ENCODE measurements at regions of chr14 and their contacts with region 1.

Region 1: GRCh38 chr14:32382704-32383103 is 53.6 kb downstream of the AKAP6 start:
- DNase-seq: no peak
- ATAC-seq: peak; percentile 93
- H3K4me3 ChIP-seq: no peak overlapping the region
- H3K27ac ChIP-seq: no peak overlapping the region
- H3K4me1 ChIP-seq: no peaks in the 10 kb centered on the region
- H3K27me3 ChIP-seq: no peaks in the 10 kb centered on the region
- CTCF ChIP-seq: peak; percentile 24 to 59 (median 47); a peak in 4 of 6 replicates
- POLR2A ChIP-seq: no peak
- RAD21 ChIP-seq: peak; percentile 73

Region 2: DNA sequence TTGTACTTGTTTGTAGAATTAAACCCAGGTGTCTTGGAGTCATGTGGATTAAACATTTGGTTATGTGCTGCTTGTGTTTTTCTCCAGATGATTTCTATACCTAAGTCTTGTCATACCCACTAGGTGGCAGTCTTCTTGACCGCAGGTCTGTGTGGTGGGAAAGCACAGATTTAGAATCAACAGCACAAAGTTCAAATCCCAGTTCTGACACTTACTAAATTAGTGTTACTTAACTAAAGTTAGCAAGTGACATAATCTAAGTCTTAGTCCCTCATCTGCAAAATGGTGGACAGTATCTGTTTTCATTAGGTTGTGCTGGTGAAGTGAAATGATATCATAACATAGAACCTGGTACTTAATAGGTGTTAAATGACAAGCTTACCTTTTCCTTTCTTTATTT is 456.6 kb before region 1 on chr14:
- CTCF ChIA-PET with region 1: no interaction called
- POLR2A ChIA-PET with region 1: no interaction called
- RAD21 ChIA-PET with region 1: no interaction called
- intact Hi-C with region 1: loop called (anchors 2 kb)
- DNase-seq: peak; percentile 54
- ATAC-seq: peak; percentile 84
- H3K4me3 ChIP-seq: no peak overlapping the region
- H3K27ac ChIP-seq: no peak overlapping the region
- H3K4me1 ChIP-seq: peaks cover 0 to 18% of the 10 kb centered on the region in 2 experiments; a peak in 2 of 4 replicates
- H3K27me3 ChIP-seq: no peaks in the 10 kb centered on the region
- CTCF ChIP-seq: peak; percentile 52 to 80 (median 72); a peak in 5 of 6 replicates
- POLR2A ChIP-seq: no peak
- RAD21 ChIP-seq: peak; percentile 57

Region 3: GRCh38 chr14:31937721-31938346 is 444.9 kb before region 1 on chr14:
- CTCF ChIA-PET with region 1: interaction called, 10 read pairs
- POLR2A ChIA-PET with region 1: interaction called, 5 read pairs
- RAD21 ChIA-PET with region 1: interaction called, 4 to 6 read pairs
- intact Hi-C with region 1: loop called (anchors 1 kb)
- DNase-seq: peak; percentile 91
- ATAC-seq: peak; percentile 91
- H3K4me3 ChIP-seq: no peak overlapping the region
- H3K27ac ChIP-seq: no peak overlapping the region
- H3K4me1 ChIP-seq: peaks cover 30 to 50% of the 10 kb centered on the region in 2 experiments
- H3K27me3 ChIP-seq: no peaks in the 10 kb centered on the region
- CTCF ChIP-seq: no peak
- POLR2A ChIP-seq: no peak
- RAD21 ChIP-seq: peak; percentile 13; the same call in 1 of the 2 replicates

Region 4: GRCh38 chr14:32408018-32408417 is 25.3 kb after region 1 on chr14:
- CTCF ChIA-PET with region 1: no interaction called
- POLR2A ChIA-PET with region 1: no interaction called
- RAD21 ChIA-PET with region 1: no interaction called
- intact Hi-C with region 1: no loop called
- DNase-seq: no peak
- ATAC-seq: no peak
- H3K4me3 ChIP-seq: no peak overlapping the region
- H3K27ac ChIP-seq: no peak overlapping the region
- H3K4me1 ChIP-seq: no peaks in the 10 kb centered on the region
- H3K27me3 ChIP-seq: no peaks in the 10 kb centered on the region
- CTCF ChIP-seq: no peak
- POLR2A ChIP-seq: no peak
- RAD21 ChIP-seq: no peak

Region 5: GRCh38 chr14:32430326-32430725 is 47.6 kb after region 1 on chr14:
- CTCF ChIA-PET with region 1: no interaction called
- POLR2A ChIA-PET with region 1: no interaction called
- RAD21 ChIA-PET with region 1: no interaction called
- intact Hi-C with region 1: no loop called
- DNase-seq: no peak
- ATAC-seq: no peak
- H3K4me3 ChIP-seq: no peak overlapping the region
- H3K27ac ChIP-seq: no peak overlapping the region
- H3K4me1 ChIP-seq: no peaks in the 10 kb centered on the region
- H3K27me3 ChIP-seq: no peaks in the 10 kb centered on the region
- CTCF ChIP-seq: no peak
- POLR2A ChIP-seq: no peak
- RAD21 ChIP-seq: no peak

Region 6: DNA sequence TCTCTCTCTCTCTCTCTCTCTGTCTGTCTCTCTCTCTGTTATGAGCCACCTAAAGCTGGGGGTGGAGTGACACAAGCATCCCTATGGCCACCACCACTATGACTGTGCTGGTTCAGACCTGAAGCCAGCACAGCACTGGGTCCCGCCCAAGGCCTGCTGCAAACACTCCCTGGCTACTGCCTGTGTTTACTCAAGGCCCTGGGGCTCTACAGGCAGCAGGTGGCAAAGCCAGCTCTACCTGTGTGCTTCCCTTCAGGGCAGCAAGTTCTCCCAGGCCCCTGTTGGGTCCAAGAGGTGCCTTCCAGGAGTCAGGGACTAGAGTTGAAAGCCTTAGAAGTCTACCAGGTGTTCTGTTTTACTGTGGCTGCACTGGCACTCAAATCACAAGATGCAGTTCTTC is 362.8 kb after region 1 on chr14:
- CTCF ChIA-PET with region 1: no interaction called
- POLR2A ChIA-PET with region 1: no interaction called
- RAD21 ChIA-PET with region 1: no interaction called
- intact Hi-C with region 1: no loop called
- DNase-seq: no peak
- ATAC-seq: no peak
- H3K4me3 ChIP-seq: no peak overlapping the region
- H3K27ac ChIP-seq: no peak overlapping the region
- H3K4me1 ChIP-seq: no peaks in the 10 kb centered on the region
- H3K27me3 ChIP-seq: no peaks in the 10 kb centered on the region; the same call in 1 of the 2 replicates
- CTCF ChIP-seq: no peak
- POLR2A ChIP-seq: no peak
- RAD21 ChIP-seq: no peak

Region 7: DNA sequence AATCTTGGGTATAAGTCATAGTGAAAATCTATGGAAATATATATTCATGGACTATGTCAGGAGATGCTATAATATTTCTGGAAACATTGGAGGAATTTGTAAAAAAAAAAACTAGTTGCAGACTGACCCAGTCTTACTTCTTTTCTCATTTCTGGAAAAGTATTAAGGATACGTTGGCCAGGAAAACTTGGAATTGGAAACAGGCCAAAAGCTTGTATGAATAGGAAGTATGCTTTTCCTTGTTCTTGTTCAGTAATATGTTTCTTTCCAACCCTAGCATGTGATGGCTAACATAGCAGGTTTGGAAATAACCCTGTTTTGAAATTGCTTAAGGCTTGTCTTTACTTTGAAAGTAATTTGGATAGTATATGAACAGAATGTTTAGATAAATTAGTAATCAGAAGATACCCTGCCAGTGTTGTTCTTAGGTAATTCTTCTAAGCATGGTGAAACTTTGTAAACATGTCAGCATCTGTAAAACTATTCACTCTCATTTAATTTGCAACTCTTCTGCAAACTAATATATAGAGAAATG is 872.2 kb after region 1 on chr14:
- CTCF ChIA-PET with region 1: no interaction called
- POLR2A ChIA-PET with region 1: no interaction called
- RAD21 ChIA-PET with region 1: no interaction called
- intact Hi-C with region 1: no loop called
- DNase-seq: no peak
- ATAC-seq: no peak
- H3K4me3 ChIP-seq: no peak overlapping the region
- H3K27ac ChIP-seq: no peak overlapping the region
- H3K4me1 ChIP-seq: no peaks in the 10 kb centered on the region
- H3K27me3 ChIP-seq: no peaks in the 10 kb centered on the region
- CTCF ChIP-seq: no peak
- POLR2A ChIP-seq: no peak
- RAD21 ChIP-seq: no peak

Measured in HCT116 (cell line).